Activated T-helper 1 cell treated with anti-CD3 and anti-CD28 coated beads, Interleukin-12 subunit alpha, Interleukin-12 subunit beta, Interleukin-2, Interleukin-4 antibody, amounts not matched to agents 30 ng/mL and 10 ng/mL and 1 ng/mL, durations not matched to agents 14 hours and 24 hours and 36 hours (primary cell): ENCODE measurements at regions of chr14 and their contacts with region 1.

Region 1: GRCh38 chr14:65164068-65164824 is 61.9 kb upstream of the MAX start:
- DNase-seq: peak; percentile 23
- H3K4me3 Mint-ChIP-seq: no peak overlapping the region
- H3K27ac Mint-ChIP-seq: no peak overlapping the region
- H3K4me1 Mint-ChIP-seq: peaks cover 50% of the 10 kb centered on the region
- H3K27me3 Mint-ChIP-seq: peaks cover 2% of the 10 kb centered on the region

Region 2: GRCh38 chr14:65102441-65103149 is 61.7 kb before region 1 on chr14 and contains the start of gene MAX:
- intact Hi-C with region 1: loop called (anchors 2 kb)
- DNase-seq: peak; percentile 98
- H3K4me3 Mint-ChIP-seq: peak within 1 kb of the TSS; percentile 95
- H3K27ac Mint-ChIP-seq: peak within 1 kb of the TSS; percentile 95
- H3K4me1 Mint-ChIP-seq: peaks cover 33% of the 10 kb centered on the region
- H3K27me3 Mint-ChIP-seq: peaks cover 6% of the 10 kb centered on the region
- total RNA-seq, gene MAX: 135 and 137 TPM in 2 replicates

Region 3: GRCh38 chr14:65637780-65638179 is 473.5 kb after region 1 on chr14:
- intact Hi-C with region 1: loop called (anchors 10 kb)
- DNase-seq: peak; percentile 31
- H3K4me3 Mint-ChIP-seq: peak overlapping the region; percentile 34
- H3K27ac Mint-ChIP-seq: peak overlapping the region; percentile 79
- H3K4me1 Mint-ChIP-seq: peaks cover 49% of the 10 kb centered on the region
- H3K27me3 Mint-ChIP-seq: no peaks in the 10 kb centered on the region

Region 4: DNA sequence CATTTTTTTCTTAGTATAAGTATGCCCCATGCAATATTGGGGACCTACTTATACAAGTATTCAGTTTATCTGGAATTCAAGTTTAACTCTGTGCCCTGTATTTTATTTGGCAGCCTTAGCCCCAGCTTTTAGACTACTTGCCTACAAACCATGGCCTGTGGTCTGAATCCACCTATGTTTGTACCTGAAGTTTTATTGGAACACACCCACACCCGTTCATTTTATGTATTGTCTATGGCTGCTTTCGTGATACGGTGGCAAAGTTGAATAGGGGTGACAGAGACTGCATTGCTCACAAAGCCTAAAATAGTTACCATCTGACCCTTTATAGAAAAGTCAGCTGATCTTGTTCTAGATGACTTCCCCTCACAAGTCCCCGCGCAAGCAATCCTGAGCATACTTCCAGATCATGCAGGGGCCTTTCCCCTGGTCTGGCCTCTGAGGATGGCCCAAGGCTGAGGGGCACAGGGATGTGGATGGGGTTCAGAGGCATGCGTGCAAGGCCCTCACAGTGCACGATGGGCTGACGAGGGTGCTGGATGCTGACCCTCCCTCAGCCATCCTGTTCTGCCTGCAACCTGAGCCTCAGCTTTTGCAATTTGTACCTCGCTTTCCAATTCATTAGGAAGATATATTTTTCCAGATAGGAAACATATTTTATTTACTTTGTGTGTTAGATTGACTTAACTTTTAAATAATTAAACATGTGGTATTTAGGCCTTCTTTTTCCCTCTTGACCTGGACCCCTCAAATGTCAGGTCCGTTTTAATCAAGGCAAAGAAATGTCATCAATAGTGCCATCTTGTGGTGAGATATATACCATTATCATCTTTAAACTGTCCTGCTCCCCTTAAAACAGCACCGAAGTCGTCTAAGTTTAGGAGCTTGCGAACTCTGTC is 794.7 kb after region 1 on chr14:
- intact Hi-C with region 1: loop called (anchors 1 kb)
- DNase-seq: no peak
- H3K4me3 Mint-ChIP-seq: no peak overlapping the region
- H3K27ac Mint-ChIP-seq: no peak overlapping the region
- H3K4me1 Mint-ChIP-seq: peaks cover 23% of the 10 kb centered on the region
- H3K27me3 Mint-ChIP-seq: peaks cover 6% of the 10 kb centered on the region

Region 5: DNA sequence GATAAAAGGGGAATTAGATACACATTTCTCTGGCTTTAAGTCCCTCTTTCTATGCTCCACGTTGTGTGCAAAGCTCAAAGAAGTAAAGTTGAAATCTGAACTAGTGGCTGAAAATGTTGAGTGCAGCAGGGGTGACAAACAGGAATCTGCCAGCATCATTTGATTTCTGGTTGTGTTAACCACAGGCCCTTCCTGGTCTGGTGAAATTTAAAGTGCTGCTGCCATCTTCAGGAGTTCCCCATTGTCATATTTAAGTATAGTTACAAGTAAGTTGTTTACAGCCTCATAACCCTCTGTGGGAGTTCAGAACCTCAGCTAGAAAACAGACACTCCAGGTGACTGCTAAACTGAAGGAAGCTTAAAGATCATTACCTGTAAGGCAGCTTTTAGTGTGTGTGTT is 1231.1 kb after region 1 on chr14:
- intact Hi-C with region 1: loop called (anchors 5 kb)
- DNase-seq: peak; percentile 34
- H3K4me3 Mint-ChIP-seq: peak overlapping the region; percentile 41
- H3K27ac Mint-ChIP-seq: peak overlapping the region; percentile 47
- H3K4me1 Mint-ChIP-seq: peaks cover 13% of the 10 kb centered on the region
- H3K27me3 Mint-ChIP-seq: peaks cover 11% of the 10 kb centered on the region